Caco-2 (cell line): ENCODE measurements at regions of chr1 and their contacts with region 1.

Region 1: GRCh38 chr1:220281159-220281574 is 8.9 kb upstream of the RAB3GAP2 start:
- DNase-seq: peak in 1 of 2 experiments; percentile 34
- H3K4me3 ChIP-seq: no peak overlapping the region
- H3K4me3 Mint-ChIP-seq: no peak overlapping the region
- H3K27ac Mint-ChIP-seq: no peak overlapping the region
- H3K4me1 ChIP-seq: no peaks in the 10 kb centered on the region
- H3K4me1 Mint-ChIP-seq: no peaks in the 10 kb centered on the region
- H3K27me3 ChIP-seq: no peaks in the 10 kb centered on the region
- H3K27me3 Mint-ChIP-seq: peaks cover 12% of the 10 kb centered on the region
- CTCF ChIP-seq: peak; percentile 63 to 68

Region 2: DNA sequence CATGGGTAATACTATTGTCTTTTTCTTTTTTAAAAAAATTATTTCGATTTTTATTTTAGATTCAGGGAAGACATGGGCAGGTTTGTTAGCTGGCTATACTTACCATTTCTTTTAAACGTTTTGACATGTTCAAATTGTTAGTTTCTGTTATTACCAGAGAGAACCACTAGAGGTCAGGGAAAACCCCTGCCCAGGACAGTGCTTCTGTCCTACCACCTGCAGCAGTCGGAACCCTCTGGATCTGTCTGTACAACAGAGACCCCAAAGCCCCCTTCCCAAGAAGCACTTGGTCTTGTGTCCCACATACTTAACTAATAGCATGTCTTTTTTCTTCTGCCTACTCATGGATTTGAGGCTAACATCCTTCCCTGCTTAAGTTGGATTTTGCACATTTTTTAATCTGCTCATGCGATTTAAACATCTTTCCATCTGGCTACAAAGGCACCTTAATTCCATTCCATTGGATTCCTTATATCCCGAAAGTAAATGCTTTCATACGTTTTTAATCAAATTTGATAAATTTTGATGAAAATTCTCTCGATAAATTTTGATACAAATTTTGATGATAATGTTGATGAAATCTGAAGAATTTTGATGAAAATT is 399.0 kb after region 1 on chr1:
- CTCF ChIA-PET with region 1: no interaction called
- POLR2A ChIA-PET with region 1: no interaction called
- intact Hi-C with region 1: loop called (anchors 1 kb)
- DNase-seq: peak in 1 of 2 experiments; percentile 59
- H3K4me3 ChIP-seq: no peak overlapping the region
- H3K4me3 Mint-ChIP-seq: no peak overlapping the region
- H3K27ac Mint-ChIP-seq: no peak overlapping the region
- H3K4me1 ChIP-seq: no peaks in the 10 kb centered on the region
- H3K4me1 Mint-ChIP-seq: no peaks in the 10 kb centered on the region
- H3K27me3 ChIP-seq: no peaks in the 10 kb centered on the region
- H3K27me3 Mint-ChIP-seq: peaks cover 4% of the 10 kb centered on the region
- CTCF ChIP-seq: peak; percentile 77 to 90